ENCODE measurements at regions of chr11 and their contacts with region 1.

Region 1: GRCh38 chr11:128290106-128290840 is 297.1 kb downstream of the ETS1 start:
- DNase-seq: peak; percentile 92
- H3K4me3 ChIP-seq: peak overlapping the region; percentile 43
- H3K27ac ChIP-seq: peak overlapping the region; percentile 63
- H3K4me1 ChIP-seq: peaks cover 35% of the 10 kb centered on the region
- CTCF ChIP-seq: peak; percentile 99

Region 2: GRCh38 chr11:128172046-128172878 is 118.0 kb before region 1 on chr11:
- CTCF ChIA-PET with region 1: no interaction called
- POLR2A ChIA-PET with region 1: interaction called, 3 read pairs
- intact Hi-C with region 1: loop called (anchors 1 kb)
- DNase-seq: peak; percentile 80
- H3K4me3 ChIP-seq: no peak overlapping the region
- H3K27ac ChIP-seq: no peak overlapping the region
- H3K4me1 ChIP-seq: no peaks in the 10 kb centered on the region
- CTCF ChIP-seq: peak; percentile 95

Region 3: GRCh38 chr11:128375961-128376360 is 85.7 kb after region 1 on chr11:
- CTCF ChIA-PET with region 1: no interaction called
- POLR2A ChIA-PET with region 1: no interaction called
- intact Hi-C with region 1: no loop called
- DNase-seq: no peak
- H3K4me3 ChIP-seq: no peak overlapping the region
- H3K27ac ChIP-seq: no peak overlapping the region
- H3K4me1 ChIP-seq: no peaks in the 10 kb centered on the region
- CTCF ChIP-seq: no peak

Region 4: DNA sequence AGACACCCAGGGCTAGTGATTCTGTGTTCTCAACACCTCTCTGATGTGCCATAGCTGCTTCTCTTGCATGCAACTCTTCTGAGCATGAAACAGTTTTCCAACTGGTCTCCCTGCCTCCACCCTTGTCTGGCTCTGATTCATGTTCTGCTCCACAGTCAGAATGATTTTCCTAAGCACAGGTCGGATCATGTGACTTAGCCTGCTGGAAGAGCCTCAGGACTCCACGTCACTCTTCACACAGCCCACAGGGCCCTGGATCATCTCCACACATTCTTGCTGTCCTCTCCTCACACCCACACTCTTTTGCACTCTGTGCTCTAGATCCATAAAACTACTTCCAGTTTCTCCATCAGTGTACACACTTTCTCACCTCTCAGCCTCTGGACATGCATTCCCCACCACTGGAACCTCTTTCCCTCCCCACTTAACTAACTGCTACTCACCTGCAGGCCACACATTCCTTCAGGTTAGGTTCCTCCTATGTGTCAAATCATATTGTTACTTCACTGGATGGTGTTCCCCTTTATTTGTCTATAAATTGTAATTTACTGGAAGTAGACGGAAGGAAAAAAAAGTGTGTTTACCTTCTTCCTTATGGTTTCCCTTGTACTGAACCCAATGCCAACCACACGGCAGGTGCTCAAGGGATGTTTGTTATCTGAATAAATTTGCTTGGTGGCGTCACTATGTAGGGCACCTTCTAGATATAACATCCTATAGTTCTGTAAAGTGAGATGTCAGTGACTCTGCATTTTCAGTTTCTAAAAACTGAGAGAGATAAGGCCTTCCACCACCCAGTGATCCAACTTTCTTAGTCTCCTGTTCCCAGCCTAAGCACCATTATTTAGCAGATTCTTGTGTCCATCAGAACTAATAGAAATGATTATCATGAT is 163.4 kb after region 1 on chr11:
- CTCF ChIA-PET with region 1: no interaction called
- POLR2A ChIA-PET with region 1: no interaction called
- intact Hi-C with region 1: loop called (anchors 5 kb)
- DNase-seq: no peak
- H3K4me3 ChIP-seq: no peak overlapping the region
- H3K27ac ChIP-seq: no peak overlapping the region
- H3K4me1 ChIP-seq: no peaks in the 10 kb centered on the region
- CTCF ChIP-seq: no peak

Measured in OCI-LY7 (cell line).